Dorsolateral prefrontal cortex (tissue), 120 donors: ENCODE measurements at regions of chr15 and their contacts with region 1.

Region 1: GRCh38 chr15:85024509-85025214 is 43.0 kb downstream of the PDE8A start:
- DNase-seq: no peak
- H3K4me3 ChIP-seq: peak overlapping the region in 18 of 59 donors; percentile 0 to 37 (median 10)
- H3K27ac ChIP-seq: peak overlapping the region; percentile 11 to 95 (median 80)
- H3K27me3 ChIP-seq: no peaks in the 10 kb centered on the region
- CTCF ChIP-seq: no peak

Region 2: GRCh38 chr15:84987949-84988624 is 36.6 kb before region 1 on chr15:
- intact Hi-C with region 1: loop called (anchors 5 kb)
- DNase-seq: no peak
- H3K4me3 ChIP-seq: no peak overlapping the region
- H3K27ac ChIP-seq: peak overlapping the region in 4 of 59 donors; percentile 7 to 40 (median 18)
- H3K27me3 ChIP-seq: no peaks in the 10 kb centered on the region
- CTCF ChIP-seq: no peak